ENCODE measurements at regions of chr19 and their contacts with region 1.

Region 1: DNA sequence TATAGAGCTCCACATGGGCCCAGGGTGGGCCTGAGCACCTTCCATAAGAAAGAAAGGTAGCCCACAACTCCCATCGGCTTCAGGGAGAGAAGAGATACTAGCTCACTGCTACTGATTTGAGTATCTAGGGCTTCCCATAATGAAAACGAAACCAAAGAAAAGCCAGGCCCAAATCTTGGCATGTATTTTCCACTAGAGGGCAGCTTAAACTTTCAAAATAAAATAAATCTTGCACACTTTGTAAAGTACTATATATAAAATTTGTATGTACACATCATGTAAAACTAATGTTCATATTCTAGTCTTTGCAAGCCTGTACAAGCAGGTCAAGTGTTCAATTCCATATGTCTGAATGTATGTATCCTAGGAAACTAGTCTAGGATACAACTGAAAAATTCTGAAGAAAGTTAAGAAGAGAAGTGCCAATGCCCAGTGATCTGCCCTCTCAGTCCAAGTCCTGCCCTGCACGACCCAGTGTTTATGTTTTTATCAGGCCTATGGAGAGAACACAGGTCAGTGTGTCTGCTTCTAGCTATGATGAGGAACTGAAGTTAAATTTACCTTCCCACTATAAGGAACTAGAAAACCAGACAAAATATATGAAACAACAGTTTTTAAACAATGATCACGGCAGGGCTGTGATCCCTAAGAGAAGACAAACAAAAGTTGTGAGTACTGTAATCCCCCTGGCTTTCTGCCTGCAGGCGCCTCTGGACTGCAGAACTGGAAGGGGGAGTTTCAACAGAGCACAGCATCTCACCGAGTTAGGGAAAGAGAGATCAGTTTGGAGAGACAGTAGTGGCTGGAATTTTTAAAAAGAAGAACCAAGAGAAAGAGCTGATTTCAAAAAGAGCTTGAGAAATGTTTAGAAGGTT is 475.7 kb downstream of the UQCRFS1 start:
- DNase-seq: no peak
- ATAC-seq: peak; percentile 63

Region 2: DNA sequence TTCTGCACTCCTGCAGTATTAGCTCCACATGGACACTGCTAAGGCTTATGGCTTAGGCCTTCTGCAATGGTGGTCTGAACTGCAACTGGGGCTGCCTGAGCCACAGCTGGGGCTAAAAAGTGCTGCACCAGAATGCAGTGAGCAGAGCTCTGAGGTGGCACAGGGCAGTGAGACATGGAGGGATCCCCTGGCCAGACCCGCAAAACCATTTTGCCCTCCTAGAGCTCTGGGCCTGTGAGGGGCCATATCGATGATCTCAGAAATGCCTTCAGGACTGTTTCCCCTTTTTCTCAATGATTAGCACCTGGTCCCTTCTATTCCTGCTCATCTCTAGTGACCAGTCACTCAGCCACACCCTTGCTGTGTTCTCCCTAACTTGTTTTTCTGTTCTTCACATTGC is 78.0 kb after region 1 on chr19:
- intact Hi-C with region 1: no loop called
- DNase-seq: no peak
- ATAC-seq: no peak

Region 3: DNA sequence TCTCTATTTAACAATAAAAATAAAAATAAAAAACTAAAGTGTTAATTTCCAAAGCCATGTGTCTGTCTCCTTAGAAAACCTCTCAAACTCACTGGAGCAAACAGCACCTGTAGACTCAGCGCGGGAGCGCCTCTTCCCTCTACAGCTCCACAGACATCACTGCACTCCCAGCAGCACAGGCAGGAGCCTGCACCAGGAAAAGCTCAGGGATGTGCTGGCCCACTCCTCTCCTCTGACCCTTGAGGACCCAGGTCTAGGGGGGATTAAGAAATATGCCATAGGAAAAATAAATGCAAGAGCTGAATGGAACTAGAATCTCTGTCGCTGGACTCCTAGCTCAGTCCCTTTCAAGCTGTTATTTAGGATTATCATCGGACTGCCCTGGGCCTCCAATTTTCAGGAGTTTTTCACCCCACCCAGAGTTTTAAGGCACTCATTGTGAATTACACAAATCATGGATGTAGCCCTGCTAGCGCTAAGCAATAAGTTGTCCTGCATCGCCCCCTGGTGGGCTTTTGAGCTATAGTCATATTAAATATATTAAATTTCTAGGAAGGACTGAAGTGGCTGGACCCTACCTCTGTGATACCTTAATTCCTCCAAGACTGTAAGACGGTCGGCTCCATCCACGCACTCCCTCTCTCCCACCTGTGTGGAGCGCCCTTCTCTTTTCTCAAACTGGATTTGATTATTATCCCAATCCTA is 141.8 kb after region 1 on chr19:
- intact Hi-C with region 1: loop called in 1 of 2 experiments (anchors 5 kb)
- DNase-seq: peak; percentile 29 to 74
- ATAC-seq: peak; percentile 58

Region 4: DNA sequence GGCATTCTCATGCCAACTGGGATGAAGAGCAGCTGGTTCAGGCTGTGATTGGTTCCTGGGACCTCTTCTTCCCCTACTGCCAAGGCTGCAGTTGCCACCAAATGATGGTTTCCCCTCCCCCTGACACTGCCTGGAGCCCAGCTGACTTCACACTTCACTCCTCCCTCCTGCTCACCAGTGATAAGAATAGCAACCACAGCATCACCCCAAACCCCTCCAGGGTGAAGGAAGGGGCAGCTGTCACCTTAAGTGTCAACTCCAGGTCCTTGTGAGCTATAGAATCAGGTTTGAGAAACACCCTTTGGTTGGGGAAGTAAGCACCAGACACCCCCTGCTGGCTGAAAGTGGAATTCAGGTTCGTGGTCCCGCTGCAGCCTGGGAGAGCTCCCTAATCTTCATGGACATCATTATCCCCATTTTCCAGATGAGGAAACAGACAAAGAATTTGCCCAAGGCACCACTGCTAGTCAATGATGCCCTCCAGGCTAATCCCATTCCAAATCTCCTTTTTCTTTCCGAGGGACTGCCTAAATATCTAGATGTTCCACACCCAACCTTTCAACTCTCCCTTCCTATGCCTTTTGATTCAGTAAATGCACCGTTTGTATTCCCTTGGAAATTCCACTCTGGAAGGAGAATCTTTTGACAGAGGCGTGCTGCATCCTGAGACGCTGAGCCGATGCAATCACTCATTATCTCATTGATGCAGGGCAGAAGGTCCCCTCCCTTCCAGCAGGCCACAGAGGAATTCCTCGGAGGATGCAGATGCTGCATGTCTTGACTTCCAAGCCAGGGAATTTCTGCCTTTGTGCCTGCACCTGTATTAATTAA is 526.3 kb after region 1 on chr19:
- intact Hi-C with region 1: loop called in 1 of 2 experiments (anchors 10 kb)
- DNase-seq: peak in 1 of 2 donors; percentile 55
- ATAC-seq: peak; percentile 49